Activated B cell treated with CpG ODN at 0.5 μM for 24 hours (primary cell): ENCODE measurements at regions of chr17 and their contacts with region 1.

Region 1: GRCh38 chr17:57255776-57256681 is at the start of gene MSI2:
- DNase-seq: peak; percentile 86
- ATAC-seq: peak; percentile 79
- H3K4me3 Mint-ChIP-seq: peak within 1 kb of the TSS; percentile 94
- H3K27ac Mint-ChIP-seq: peak within 1 kb of the TSS; percentile 88
- H3K4me1 Mint-ChIP-seq: peaks cover 44% of the 10 kb centered on the region
- H3K27me3 Mint-ChIP-seq: no peaks in the 10 kb centered on the region
- CTCF ChIP-seq: no peak
- total RNA-seq, gene MSI2: 93.2 and 102 TPM in 2 replicates

Region 2: DNA sequence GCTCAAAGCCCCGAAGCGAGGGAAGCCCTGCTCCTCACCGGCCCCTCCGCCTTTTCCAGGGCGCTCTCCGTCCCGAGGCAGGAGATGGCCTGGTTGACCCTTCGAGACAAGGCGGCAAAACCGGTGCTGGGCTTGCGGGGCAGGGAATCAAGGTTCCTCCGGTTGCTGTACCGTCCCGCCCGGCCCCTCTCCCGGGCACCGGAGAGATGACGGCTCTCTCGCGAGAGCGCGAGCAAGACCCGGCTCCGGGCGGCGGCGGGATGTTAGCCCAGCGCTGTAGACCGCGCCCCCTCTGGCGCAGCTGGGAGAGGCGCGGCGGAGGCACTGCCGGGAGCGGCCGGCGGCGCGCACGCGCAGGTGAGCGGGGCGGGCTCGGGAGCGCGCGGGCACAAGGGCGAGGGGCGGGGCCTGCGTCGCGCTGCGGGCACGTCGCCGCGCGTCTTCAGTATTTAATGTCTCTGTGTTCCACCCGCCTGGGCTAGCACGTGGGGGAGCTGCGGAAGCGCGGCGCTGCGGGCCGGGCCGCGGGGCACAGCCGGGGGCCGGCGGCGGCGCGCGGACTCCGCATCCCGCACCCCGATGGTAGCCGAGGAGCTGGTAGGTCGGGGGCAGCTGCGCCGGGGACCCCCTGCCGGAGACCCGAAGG is 171.1 kb before region 1 on chr17 and contains the start of gene AKAP1:
- CTCF ChIA-PET with region 1: no interaction called
- POLR2A ChIA-PET with region 1: no interaction called
- intact Hi-C with region 1: loop called (anchors 5 kb)
- DNase-seq: peak; percentile 94
- ATAC-seq: peak; percentile 89
- H3K4me3 Mint-ChIP-seq: peak within 1 kb of the TSS; percentile 90
- H3K27ac Mint-ChIP-seq: peak within 1 kb of the TSS; percentile 91
- H3K4me1 Mint-ChIP-seq: peaks cover 25% of the 10 kb centered on the region
- H3K27me3 Mint-ChIP-seq: no peaks in the 10 kb centered on the region
- CTCF ChIP-seq: no peak
- total RNA-seq, gene AKAP1: 22.5 and 26.2 TPM in 2 replicates

Region 3: GRCh38 chr17:57195785-57196460 is 60.1 kb before region 1 on chr17:
- CTCF ChIA-PET with region 1: no interaction called
- POLR2A ChIA-PET with region 1: no interaction called
- intact Hi-C with region 1: no loop called
- DNase-seq: no peak
- ATAC-seq: no peak
- H3K4me3 Mint-ChIP-seq: no peak overlapping the region
- H3K27ac Mint-ChIP-seq: no peak overlapping the region
- H3K4me1 Mint-ChIP-seq: no peaks in the 10 kb centered on the region
- H3K27me3 Mint-ChIP-seq: peaks cover 16% of the 10 kb centered on the region
- CTCF ChIP-seq: no peak

Region 4: DNA sequence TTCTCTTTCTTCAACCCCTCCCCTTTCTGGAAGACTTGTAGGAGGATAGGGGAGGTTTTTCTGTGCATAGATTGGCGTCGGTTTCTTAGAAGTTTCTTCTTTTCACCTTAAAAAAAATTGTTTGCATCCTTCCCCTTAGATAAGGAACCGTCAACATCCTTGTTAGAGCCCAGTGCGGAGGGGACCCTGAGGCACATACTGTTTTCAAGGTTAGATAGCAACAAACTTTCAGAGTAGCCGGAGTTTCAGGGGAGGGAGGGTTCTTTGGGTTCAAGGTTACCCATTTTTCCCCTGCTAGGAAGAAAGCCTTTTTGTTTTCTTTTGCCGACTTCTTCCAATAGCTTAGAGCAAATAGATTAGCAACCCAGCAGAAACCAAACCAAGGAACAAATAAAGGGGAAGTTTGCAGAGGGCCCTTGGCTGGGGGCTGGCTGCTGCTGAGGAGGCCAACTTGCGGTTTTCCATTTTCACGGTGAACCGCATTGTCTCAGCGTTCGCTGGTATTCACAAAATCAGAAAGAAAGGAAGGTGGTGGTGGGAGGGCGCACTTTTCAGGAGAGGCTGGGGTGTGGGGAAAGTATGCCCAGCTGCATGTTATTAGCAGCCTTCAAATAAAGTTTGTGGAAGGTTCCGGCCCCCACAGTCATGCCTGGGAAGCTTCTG is 29.1 kb after region 1 on chr17:
- CTCF ChIA-PET with region 1: no interaction called
- POLR2A ChIA-PET with region 1: interaction called, 16 read pairs
- intact Hi-C with region 1: loop called (anchors 1 kb)
- DNase-seq: peak; percentile 38
- ATAC-seq: peak; percentile 89
- H3K4me3 Mint-ChIP-seq: peak overlapping the region; percentile 79
- H3K27ac Mint-ChIP-seq: peak overlapping the region; percentile 74
- H3K4me1 Mint-ChIP-seq: peaks cover 43% of the 10 kb centered on the region
- H3K27me3 Mint-ChIP-seq: no peaks in the 10 kb centered on the region
- CTCF ChIP-seq: no peak

Region 5: GRCh38 chr17:57463103-57463851 is 207.2 kb after region 1 on chr17:
- CTCF ChIA-PET with region 1: no interaction called
- POLR2A ChIA-PET with region 1: interaction called, 7 read pairs
- intact Hi-C with region 1: loop called (anchors 1 kb)
- DNase-seq: peak; percentile 52
- ATAC-seq: peak; percentile 94
- H3K4me3 Mint-ChIP-seq: peak overlapping the region; percentile 65
- H3K27ac Mint-ChIP-seq: peak overlapping the region; percentile 79
- H3K4me1 Mint-ChIP-seq: peaks cover 89% of the 10 kb centered on the region
- H3K27me3 Mint-ChIP-seq: no peaks in the 10 kb centered on the region
- CTCF ChIP-seq: no peak

Region 6: GRCh38 chr17:57622683-57623433 is 366.8 kb after region 1 on chr17:
- CTCF ChIA-PET with region 1: no interaction called
- POLR2A ChIA-PET with region 1: interaction called, 17 read pairs
- intact Hi-C with region 1: loop called (anchors 2 kb)
- DNase-seq: no peak
- ATAC-seq: peak; percentile 82
- H3K4me3 Mint-ChIP-seq: peak overlapping the region; percentile 77
- H3K27ac Mint-ChIP-seq: peak overlapping the region; percentile 89
- H3K4me1 Mint-ChIP-seq: peaks cover 60% of the 10 kb centered on the region
- H3K27me3 Mint-ChIP-seq: no peaks in the 10 kb centered on the region
- CTCF ChIP-seq: no peak

Region 7: GRCh38 chr17:57849874-57850754 is 594.1 kb after region 1 on chr17 and contains the start of gene MRPS23:
- CTCF ChIA-PET with region 1: no interaction called
- POLR2A ChIA-PET with region 1: no interaction called
- intact Hi-C with region 1: loop called (anchors 2 kb)
- DNase-seq: peak; percentile 87
- ATAC-seq: peak; percentile 95
- H3K4me3 Mint-ChIP-seq: peak within 1 kb of the TSS; percentile 93
- H3K27ac Mint-ChIP-seq: peak within 1 kb of the TSS; percentile 96
- H3K4me1 Mint-ChIP-seq: peaks cover 38% of the 10 kb centered on the region
- H3K27me3 Mint-ChIP-seq: no peaks in the 10 kb centered on the region
- CTCF ChIP-seq: no peak
- total RNA-seq, gene MRPS23: 37.9 and 47.4 TPM in 2 replicates